ENCODE measurements at regions of chr1 and their contacts with region 1.

Region 1: DNA sequence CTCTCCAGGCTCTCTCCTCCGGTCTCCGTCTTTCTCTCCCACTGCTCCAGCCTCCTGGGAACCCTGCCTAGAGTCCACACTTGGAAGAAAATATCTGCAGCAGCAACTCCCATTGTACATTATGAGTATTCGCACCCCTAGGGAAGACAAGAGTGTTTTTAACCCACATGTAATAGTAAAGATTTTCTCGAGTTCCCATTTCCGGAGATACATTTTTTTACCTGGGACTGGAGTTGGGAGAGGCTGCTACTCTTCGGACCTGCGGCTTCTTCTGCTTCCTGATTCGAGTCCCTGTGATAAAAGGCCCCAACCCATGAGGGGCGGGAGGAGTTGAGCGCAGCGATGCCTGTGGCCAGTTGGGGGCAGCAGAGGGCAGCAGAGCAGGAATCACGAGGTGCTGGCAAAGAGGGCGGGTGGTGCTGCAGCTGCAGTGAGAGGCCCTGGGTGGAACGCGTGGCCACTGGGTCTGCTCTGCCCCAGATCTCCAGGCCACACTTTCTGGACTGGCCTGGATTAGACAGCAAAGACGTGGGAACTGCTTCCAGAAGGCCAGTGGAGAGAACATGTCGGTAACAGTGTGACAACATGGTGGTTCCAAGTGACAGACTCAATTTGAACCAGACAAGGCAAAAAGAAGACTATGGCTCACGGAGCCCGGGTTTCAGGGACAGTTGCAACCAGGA is 221.0 kb upstream of the CSF3R start:
- DNase-seq: peak; percentile 67
- H3K4me3 ChIP-seq: no peak overlapping the region
- H3K27ac ChIP-seq: no peak overlapping the region
- H3K4me1 ChIP-seq: no peaks in the 10 kb centered on the region
- H3K27me3 ChIP-seq: no peaks in the 10 kb centered on the region
- CTCF ChIP-seq: peak; percentile 81

Region 2: GRCh38 chr1:37020653-37021277 is 317.1 kb after region 1 on chr1:
- intact Hi-C with region 1: no loop called
- DNase-seq: no peak
- H3K4me3 ChIP-seq: no peak overlapping the region
- H3K27ac ChIP-seq: no peak overlapping the region
- H3K4me1 ChIP-seq: no peaks in the 10 kb centered on the region
- H3K27me3 ChIP-seq: no peaks in the 10 kb centered on the region
- CTCF ChIP-seq: no peak

Region 3: GRCh38 chr1:37177247-37177864 is 473.7 kb after region 1 on chr1:
- intact Hi-C with region 1: loop called (anchors 10 kb)
- DNase-seq: peak; percentile 27
- H3K4me3 ChIP-seq: no peak overlapping the region
- H3K27ac ChIP-seq: no peak overlapping the region
- H3K4me1 ChIP-seq: no peaks in the 10 kb centered on the region
- H3K27me3 ChIP-seq: no peaks in the 10 kb centered on the region
- CTCF ChIP-seq: no peak

Region 4: DNA sequence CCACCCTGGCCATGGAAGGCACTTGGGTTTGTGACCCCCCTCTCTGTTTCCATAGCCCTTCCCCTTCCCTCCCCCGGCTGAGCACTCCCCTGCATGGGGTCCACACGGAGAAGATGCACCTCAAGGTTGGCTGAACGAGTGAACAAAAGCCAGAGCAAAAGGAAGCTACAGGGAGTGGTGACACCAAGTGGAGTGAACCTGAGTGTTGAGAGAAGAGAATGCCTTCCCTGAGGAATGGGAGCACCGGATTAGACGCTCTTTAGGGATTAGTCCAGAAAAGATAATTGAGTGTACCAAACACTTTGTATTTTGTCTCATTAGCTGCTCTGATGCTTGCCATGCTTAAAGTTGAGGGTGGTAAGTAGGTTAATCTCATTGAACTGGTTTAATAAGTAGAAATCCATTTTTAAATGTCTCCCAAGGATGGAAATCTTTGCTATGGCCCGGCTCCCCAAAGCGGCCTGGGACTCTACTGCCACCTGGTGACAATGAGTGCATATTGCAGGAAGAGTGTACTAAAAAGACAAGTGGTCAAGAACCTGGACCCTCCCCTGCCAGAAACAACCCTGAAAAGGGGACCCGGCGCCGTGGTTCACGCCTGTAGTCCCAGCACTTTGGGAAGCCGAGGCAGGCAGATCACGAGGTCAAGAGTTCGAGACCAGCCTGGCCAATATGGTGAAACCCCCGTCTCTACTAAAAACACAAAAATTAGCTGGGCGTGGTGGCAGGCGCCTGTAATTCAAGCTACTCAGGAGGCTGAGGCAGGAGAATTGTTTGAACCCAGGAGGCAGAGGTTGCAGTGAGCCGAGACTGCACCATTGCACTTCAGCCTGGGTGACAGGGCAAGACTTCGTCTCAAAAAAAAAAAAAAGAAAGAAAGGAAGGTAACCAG is 620.1 kb after region 1 on chr1:
- intact Hi-C with region 1: loop called (anchors 5 kb)
- DNase-seq: peak; percentile 29
- H3K4me3 ChIP-seq: no peak overlapping the region
- H3K27ac ChIP-seq: no peak overlapping the region
- H3K4me1 ChIP-seq: no peaks in the 10 kb centered on the region
- H3K27me3 ChIP-seq: peaks cover 2% of the 10 kb centered on the region
- CTCF ChIP-seq: peak; percentile 55

Region 5: GRCh38 chr1:37415611-37416244 is 712.1 kb after region 1 on chr1:
- intact Hi-C with region 1: loop called (anchors 5 kb)
- DNase-seq: no peak
- H3K4me3 ChIP-seq: no peak overlapping the region
- H3K27ac ChIP-seq: no peak overlapping the region
- H3K4me1 ChIP-seq: no peaks in the 10 kb centered on the region
- H3K27me3 ChIP-seq: no peaks in the 10 kb centered on the region
- CTCF ChIP-seq: no peak

Region 6: GRCh38 chr1:37434292-37434907 is 730.7 kb after region 1 on chr1:
- intact Hi-C with region 1: loop called (anchors 5 kb)
- DNase-seq: peak; percentile 64
- H3K4me3 ChIP-seq: no peak overlapping the region
- H3K27ac ChIP-seq: no peak overlapping the region
- H3K4me1 ChIP-seq: no peaks in the 10 kb centered on the region
- H3K27me3 ChIP-seq: no peaks in the 10 kb centered on the region
- CTCF ChIP-seq: peak; percentile 93